A549 (cell line): ENCODE measurements at regions of chr17 and their contacts with region 1.

Region 1: DNA sequence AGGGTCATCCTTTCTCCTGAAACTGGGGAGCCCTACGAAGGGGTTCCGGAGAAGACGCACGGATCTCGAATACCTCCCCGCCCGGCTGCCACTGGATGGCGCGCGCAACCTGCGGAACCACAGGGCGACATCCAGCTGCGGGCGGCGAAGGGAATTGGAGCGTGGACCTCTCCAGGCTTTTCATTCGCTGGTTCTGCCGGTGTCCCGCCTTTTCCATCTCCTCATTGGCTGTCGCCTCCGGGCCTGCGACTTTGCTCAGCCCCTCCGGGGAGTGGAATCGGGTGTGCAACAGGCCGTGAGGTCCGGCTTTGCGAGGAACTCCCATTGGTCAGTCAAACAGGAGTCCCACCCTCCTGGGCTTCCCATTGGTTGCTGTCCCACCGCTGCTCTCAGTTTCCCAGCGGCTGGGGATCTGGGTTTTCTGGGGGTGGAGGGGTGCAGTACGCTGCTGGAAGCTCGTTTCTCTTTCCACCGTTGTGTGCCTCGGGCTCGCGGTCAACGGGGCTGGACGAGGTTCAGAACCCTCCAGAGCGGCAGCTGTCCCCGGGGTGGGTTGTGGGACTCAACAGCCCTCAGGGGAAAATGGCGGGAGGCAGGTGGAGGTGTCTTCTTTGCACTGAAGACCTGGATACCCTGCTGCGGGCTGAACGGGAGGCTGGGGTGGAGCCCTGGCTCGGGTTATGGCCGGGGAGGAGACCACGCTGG is 14.5 kb downstream of the OR1D5 start:
- DNase-seq: peak; percentile 96 to 99
- ATAC-seq: peak; percentile 99
- H3K4me3 ChIP-seq: peak overlapping the region; percentile 58
- H3K27ac ChIP-seq: peak overlapping the region; percentile 74 to 91
- H3K4me1 ChIP-seq: peaks cover 8% of the 10 kb centered on the region; the same call in 1 of the 3 replicates
- CTCF ChIP-seq: peak; percentile 95
- EP300 ChIP-seq: no peak
- POLR2A ChIP-seq: peak; percentile 80
- RAD21 ChIP-seq: peak; percentile 97 to 99

Region 2: GRCh38 chr17:3030096-3030495 is 18.8 kb before region 1 on chr17:
- CTCF ChIA-PET with region 1: interaction called, 18 read pairs
- POLR2A ChIA-PET with region 1: no interaction called
- DNase-seq: no peak
- ATAC-seq: no peak
- H3K4me3 ChIP-seq: no peak overlapping the region
- H3K27ac ChIP-seq: no peak overlapping the region
- H3K4me1 ChIP-seq: no peaks in the 10 kb centered on the region
- CTCF ChIP-seq: no peak
- EP300 ChIP-seq: no peak
- POLR2A ChIP-seq: no peak
- RAD21 ChIP-seq: no peak

Region 3: DNA sequence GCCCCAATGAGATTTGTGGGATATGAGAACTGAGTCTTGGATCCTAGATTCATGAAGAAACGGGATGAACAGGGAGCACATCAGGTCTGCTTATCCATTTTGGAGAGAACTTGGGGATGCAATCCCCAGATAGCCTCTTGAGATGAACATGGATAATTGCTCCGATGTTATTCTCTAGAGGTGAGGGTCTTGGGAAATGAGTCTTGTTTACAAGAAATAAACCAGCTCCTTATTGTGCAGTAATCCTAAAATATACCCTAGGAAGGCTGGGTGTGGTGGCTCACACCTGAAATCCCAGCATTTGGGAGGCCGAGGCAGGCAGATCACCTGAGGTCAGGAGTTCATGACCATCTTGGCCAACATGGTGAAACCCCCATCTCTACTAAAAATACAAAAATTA is 55.4 kb after region 1 on chr17 and contains the start of gene OR1D2:
- CTCF ChIA-PET with region 1: no interaction called
- POLR2A ChIA-PET with region 1: no interaction called
- DNase-seq: no peak
- ATAC-seq: no peak
- H3K4me3 ChIP-seq: no peak within 1 kb of the TSS
- H3K27ac ChIP-seq: no peak within 1 kb of the TSS
- H3K4me1 ChIP-seq: no peaks in the 10 kb centered on the region
- CTCF ChIP-seq: no peak
- EP300 ChIP-seq: no peak
- POLR2A ChIP-seq: no peak
- RAD21 ChIP-seq: no peak
- polyA plus RNA-seq, gene OR1D2: not detected in 2 replicates

Region 4: DNA sequence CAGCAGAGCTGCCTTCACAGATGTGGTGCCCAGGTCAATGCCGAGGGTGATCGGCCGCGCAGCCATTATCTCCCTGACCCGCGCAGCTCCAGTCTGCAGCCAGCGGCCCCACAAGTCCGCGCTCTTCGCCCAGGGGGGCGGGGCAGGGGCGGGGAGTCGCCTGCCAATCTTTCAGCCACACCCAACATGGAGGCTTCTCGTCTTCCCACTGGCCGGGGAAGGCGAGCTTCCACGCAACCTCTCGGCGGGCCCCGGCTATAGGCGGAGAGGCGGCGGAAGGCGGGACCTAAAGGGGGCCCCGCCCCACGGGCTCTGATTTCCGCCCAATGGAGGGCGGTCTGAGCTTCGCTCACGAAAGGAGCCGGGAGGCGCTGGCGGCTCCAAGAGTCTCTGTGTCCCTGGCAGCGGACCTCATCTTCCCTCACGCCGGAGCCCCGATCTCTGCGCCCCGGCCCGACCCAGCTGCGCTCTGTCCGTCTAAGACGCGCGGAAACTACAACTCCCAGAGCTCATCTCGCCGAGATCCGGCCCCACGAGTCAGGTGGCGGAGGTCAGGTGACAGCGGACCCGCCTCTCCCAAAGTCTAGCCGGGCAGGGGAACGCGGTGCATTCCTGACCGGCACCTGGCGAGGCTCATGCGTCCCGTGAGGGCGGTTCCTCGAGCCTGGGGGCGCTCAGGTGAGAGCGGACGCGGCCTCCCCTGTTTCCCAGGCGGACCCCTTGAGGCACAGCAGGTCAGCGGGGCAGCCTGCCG is 587.4 kb after region 1 on chr17 and contains the starts of genes CTNS and SHPK:
- CTCF ChIA-PET with region 1: interaction called, 27 read pairs
- POLR2A ChIA-PET with region 1: interaction called, 9 read pairs
- DNase-seq: peak; percentile 97 to 99
- ATAC-seq: peak; percentile 94 to 97
- H3K4me3 ChIP-seq: peak within 1 kb of the TSS; percentile 93
- H3K27ac ChIP-seq: peak within 1 kb of the TSS; percentile 90 to 97
- H3K4me1 ChIP-seq: peaks cover 14% of the 10 kb centered on the region
- CTCF ChIP-seq: no peak
- EP300 ChIP-seq: no peak
- POLR2A ChIP-seq: peak; percentile 93
- RAD21 ChIP-seq: no peak
- polyA plus RNA-seq, gene CTNS: 6.5 and 7.4 TPM in 2 replicates
- polyA plus RNA-seq, gene SHPK: 10.7 and 13.4 TPM in 2 replicates

Region 5: DNA sequence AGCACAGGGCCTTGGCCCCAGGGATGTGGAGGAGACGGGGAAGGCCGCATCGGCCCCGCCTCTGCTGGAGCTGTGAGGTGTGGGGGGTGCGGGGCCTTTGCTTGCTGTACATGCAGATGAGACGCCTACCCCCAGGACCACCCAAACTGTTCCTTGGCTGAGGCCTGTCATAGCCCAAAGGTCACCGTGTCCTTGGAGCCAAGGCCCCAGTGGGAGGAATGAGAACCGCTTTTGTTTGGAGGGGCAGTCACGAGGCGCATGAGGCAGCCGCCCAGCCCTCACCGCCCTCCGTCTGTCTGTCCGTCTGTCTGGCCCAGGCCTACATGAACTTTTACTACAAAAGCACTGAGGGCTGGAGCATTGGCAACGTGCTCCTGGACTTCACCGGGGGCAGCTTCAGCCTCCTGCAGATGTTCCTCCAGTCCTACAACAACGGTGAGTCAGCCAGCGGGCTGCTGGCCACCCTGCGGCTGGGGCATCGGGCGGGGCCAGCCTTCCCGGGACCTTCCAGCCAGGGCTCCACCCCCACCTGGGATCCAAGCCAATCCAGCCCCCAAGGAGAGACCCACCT is 610.7 kb after region 1 on chr17:
- CTCF ChIA-PET with region 1: interaction called, 13 read pairs
- POLR2A ChIA-PET with region 1: no interaction called
- DNase-seq: peak; percentile 61 to 80
- ATAC-seq: peak; percentile 51 to 68
- H3K4me3 ChIP-seq: no peak overlapping the region
- H3K27ac ChIP-seq: peak overlapping the region; percentile 42 to 80
- H3K4me1 ChIP-seq: peaks cover 15% of the 10 kb centered on the region
- CTCF ChIP-seq: no peak
- EP300 ChIP-seq: no peak
- POLR2A ChIP-seq: no peak
- RAD21 ChIP-seq: no peak